ENCODE measurements at regions of chr19 and their contacts with region 1.

Region 1: DNA sequence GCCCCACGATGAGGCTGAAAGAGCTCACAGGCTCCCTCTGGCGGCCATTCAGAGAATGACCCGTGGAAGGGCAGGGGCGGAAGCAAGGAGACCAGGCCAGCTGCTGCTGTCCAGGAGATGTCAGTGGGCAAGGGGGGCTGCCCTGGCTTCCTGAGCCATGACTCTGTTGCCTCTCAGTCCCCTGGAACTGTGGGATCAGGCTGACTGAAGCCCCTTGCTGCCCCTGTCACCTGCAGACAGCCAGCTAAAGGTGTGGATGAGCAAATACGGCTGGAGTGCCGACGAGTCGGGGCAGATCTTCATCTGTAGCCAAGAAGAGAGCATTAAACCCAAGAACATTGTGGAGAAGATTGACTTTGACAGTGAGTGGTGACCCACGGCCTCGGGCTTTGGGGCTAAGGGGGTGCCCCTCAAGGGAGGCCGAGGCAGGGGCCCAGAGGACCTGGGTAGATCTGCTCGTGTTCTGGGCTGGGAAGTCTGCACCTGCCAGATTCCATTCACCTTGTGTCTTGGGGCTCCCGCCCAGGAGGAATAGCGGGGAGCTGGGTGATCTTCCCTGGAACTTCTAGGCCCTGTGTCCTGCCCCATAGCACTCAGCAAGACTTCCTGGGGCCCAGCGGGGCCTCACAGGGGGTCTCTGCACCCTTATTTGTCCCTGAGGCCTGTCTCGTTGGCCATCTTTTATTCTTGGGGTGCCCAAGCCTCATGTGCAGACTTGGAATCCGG is 12.5 kb upstream of the ACTN4 start:
- DNase-seq: peak; percentile 80 to 93
- ATAC-seq: peak; percentile 58 to 64; a peak in 5 of 6 replicates
- H3K4me3 ChIP-seq: no peak overlapping the region
- H3K27ac ChIP-seq: peak overlapping the region; percentile 9 to 77; a peak in 3 of 6 replicates
- H3K4me1 ChIP-seq: peaks cover 55% of the 10 kb centered on the region
- CTCF ChIP-seq: peak; percentile 99
- EP300 ChIP-seq: no peak
- POLR2A ChIP-seq: no peak
- RAD21 ChIP-seq: peak; percentile 82 to 88

Region 2: DNA sequence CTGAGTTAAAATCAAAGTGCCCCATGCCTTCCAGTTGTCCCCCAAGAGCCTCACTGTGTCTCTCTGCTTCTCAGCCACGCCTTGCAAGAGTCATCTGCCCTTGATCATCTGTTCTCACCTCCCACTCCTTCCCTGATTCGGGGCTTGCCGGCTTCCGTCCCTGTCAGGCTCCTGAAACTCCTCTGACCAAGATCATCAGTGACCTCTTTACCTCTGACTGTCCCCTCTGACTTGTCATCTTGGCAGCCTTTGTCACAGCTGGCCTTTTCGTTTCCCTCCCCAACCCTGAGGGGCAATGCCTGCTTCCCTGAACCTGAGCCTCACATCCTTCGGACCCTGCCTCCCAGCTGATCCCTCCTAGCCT is 83.5 kb before region 1 on chr19:
- CTCF ChIA-PET with region 1: interaction called, 149 read pairs
- POLR2A ChIA-PET with region 1: interaction called, 3 read pairs
- DNase-seq: no peak
- ATAC-seq: peak in 1 of 2 experiments; percentile 30; a peak in 3 of 6 replicates
- H3K4me3 ChIP-seq: no peak overlapping the region
- H3K27ac ChIP-seq: no peak overlapping the region
- H3K4me1 ChIP-seq: no peaks in the 10 kb centered on the region
- CTCF ChIP-seq: no peak
- EP300 ChIP-seq: no peak
- POLR2A ChIP-seq: no peak
- RAD21 ChIP-seq: no peak

Region 3: GRCh38 chr19:38647368-38647965 is 12.5 kb after region 1 on chr19 and contains the start of gene ACTN4:
- CTCF ChIA-PET with region 1: interaction called, 157 read pairs
- POLR2A ChIA-PET with region 1: interaction called, 18 read pairs
- DNase-seq: peak; percentile 99
- ATAC-seq: peak; percentile 65 to 68
- H3K4me3 ChIP-seq: peak within 1 kb of the TSS; percentile 85
- H3K27ac ChIP-seq: peak within 1 kb of the TSS; percentile 87 to 91
- H3K4me1 ChIP-seq: peaks cover 38% of the 10 kb centered on the region
- CTCF ChIP-seq: no peak
- EP300 ChIP-seq: no peak; a peak in 1 of 5 replicates
- POLR2A ChIP-seq: peak; percentile 100
- RAD21 ChIP-seq: peak in 1 of 2 experiments; percentile 50; a peak in 2 of 5 replicates
- polyA plus RNA-seq, gene ACTN4: 605 and 614 TPM in 2 replicates

Region 4: DNA sequence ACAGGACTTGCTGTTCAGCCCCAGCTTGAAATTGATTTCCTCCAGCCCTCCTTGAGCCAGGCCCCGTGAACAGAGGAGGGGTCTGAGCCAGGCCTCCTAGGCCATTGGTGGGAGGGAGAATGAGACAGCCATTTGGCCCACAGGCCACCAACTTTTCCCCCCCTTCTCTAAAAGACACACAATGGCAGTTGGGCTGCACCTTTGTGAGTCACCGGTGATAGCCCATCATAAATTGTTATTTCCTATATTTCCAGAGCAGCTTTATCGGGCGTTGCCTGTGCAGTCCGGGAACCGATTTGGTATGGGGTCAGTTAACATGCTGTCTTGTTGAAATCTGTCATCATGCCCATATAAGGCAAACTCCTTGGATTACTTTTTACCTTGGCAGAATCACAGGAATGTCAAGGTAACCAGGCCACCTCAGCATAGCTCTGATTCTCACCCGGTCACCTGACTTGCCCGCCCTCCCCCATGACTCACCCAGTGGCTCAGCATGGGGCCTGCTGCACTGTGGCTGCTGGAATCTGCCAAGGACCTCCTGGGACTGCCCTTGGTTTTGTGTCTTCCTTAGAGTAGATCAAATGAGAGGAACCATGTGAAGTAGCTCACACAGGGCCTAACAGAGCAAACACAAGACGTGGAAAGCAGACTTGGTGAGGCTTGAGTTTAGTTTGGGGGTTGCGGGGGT is 48.6 kb after region 1 on chr19:
- CTCF ChIA-PET with region 1: interaction called, 68 read pairs
- POLR2A ChIA-PET with region 1: interaction called, 3 read pairs
- DNase-seq: peak; percentile 100
- ATAC-seq: peak; percentile 68 to 74
- H3K4me3 ChIP-seq: peak overlapping the region; percentile 6; the same call in 2 of the 3 replicates
- H3K27ac ChIP-seq: peak overlapping the region; percentile 93 to 94
- H3K4me1 ChIP-seq: peaks cover 90% of the 10 kb centered on the region
- CTCF ChIP-seq: no peak
- EP300 ChIP-seq: peak; percentile 93 to 95; a peak in 4 of 5 replicates
- POLR2A ChIP-seq: no peak; the same call in 1 of the 2 replicates
- RAD21 ChIP-seq: peak in 1 of 2 experiments; percentile 37

Region 5: DNA sequence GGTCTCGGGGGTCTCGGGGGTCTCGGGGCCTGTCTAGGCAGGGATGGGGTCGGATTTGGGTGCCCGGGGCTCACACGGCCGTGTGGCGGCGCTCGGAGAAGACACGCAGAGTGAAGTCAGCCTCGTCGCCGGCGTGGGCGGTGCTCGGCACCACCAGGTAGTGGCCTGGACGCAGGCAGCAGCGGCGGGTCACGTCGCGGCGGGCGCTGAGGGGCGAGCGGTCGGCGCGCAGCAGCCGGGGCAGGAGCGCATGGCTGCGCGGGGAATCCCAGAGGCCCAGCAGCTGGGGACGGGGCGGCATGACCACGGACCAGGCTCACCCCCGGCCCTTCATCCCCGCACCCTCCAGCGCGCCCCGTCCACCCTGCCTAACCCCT is 101.1 kb after region 1 on chr19:
- CTCF ChIA-PET with region 1: interaction called, 44 read pairs
- POLR2A ChIA-PET with region 1: no interaction called
- DNase-seq: peak; percentile 80 to 81
- ATAC-seq: peak; percentile 11 to 53
- H3K4me3 ChIP-seq: peak overlapping the region; percentile 49
- H3K27ac ChIP-seq: peak overlapping the region; percentile 70 to 88
- H3K4me1 ChIP-seq: peaks cover 57% of the 10 kb centered on the region
- CTCF ChIP-seq: 0 out of 3 replicates have a peak, but pooled peaks have one; percentile 12
- EP300 ChIP-seq: no peak
- POLR2A ChIP-seq: peak; percentile 43; the same call in 1 of the 2 replicates
- RAD21 ChIP-seq: peak; percentile 13 to 43; a peak in 4 of 5 replicates

Region 6: GRCh38 chr19:38929929-38930775 is 295.2 kb after region 1 on chr19 and contains the start of gene SARS2:
- CTCF ChIA-PET with region 1: interaction called, 44 read pairs
- POLR2A ChIA-PET with region 1: interaction called, 8 read pairs
- DNase-seq: peak; percentile 98 to 99
- ATAC-seq: peak; percentile 65 to 69
- H3K4me3 ChIP-seq: peak within 1 kb of the TSS; percentile 66
- H3K27ac ChIP-seq: peak within 1 kb of the TSS; percentile 87
- H3K4me1 ChIP-seq: peaks cover 19% of the 10 kb centered on the region
- CTCF ChIP-seq: peak; percentile 100
- EP300 ChIP-seq: no peak
- POLR2A ChIP-seq: no peak
- RAD21 ChIP-seq: peak; percentile 88 to 98
- polyA plus RNA-seq, gene SARS2: 46.1 and 46.7 TPM in 2 replicates

Measured in A549 (cell line).